ENCODE measurements at regions of chr17 and their contacts with region 1.

Region 1: GRCh38 chr17:67475236-67475937 is 98.3 kb downstream of the PITPNC1 start:
- DNase-seq: peak; percentile 95
- ATAC-seq: peak; percentile 75
- H3K4me3 ChIP-seq: no peak overlapping the region
- H3K27ac ChIP-seq: peak overlapping the region; percentile 76
- H3K4me1 ChIP-seq: peaks cover 19% of the 10 kb centered on the region
- H3K27me3 ChIP-seq: no peaks in the 10 kb centered on the region
- CTCF ChIP-seq: peak; percentile 99

Region 2: GRCh38 chr17:67390646-67391384 is 84.6 kb before region 1 on chr17:
- CTCF ChIA-PET with region 1: interaction called, 8 read pairs
- POLR2A ChIA-PET with region 1: interaction called, 5 read pairs
- intact Hi-C with region 1: loop called (anchors 1 kb)
- DNase-seq: peak; percentile 99
- ATAC-seq: peak; percentile 96
- H3K4me3 ChIP-seq: no peak overlapping the region
- H3K27ac ChIP-seq: peak overlapping the region; percentile 93
- H3K4me1 ChIP-seq: peaks cover 22% of the 10 kb centered on the region
- H3K27me3 ChIP-seq: no peaks in the 10 kb centered on the region
- CTCF ChIP-seq: peak; percentile 40

Region 3: DNA sequence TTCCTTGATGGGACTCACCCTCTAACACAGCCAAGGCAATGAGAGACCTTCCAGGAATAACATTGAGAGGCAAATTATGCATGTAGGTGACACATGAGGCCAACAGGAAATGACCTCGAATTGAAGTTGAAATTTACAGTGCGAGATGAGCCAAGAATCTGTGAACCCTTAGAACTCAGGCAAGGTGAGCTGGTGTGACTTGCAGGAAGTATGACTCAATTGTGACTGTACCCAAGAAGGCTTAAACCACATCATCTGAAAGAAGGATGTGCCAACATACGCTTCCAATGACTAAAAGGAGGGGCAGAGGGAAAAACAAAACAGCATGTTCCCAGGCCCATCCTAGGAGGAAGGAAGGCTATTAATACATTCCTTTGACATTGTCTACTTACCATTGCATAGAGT is 53.5 kb before region 1 on chr17:
- CTCF ChIA-PET with region 1: interaction called, 5 read pairs
- POLR2A ChIA-PET with region 1: no interaction called
- intact Hi-C with region 1: loop called (anchors 1 kb)
- DNase-seq: peak; percentile 100
- ATAC-seq: peak; percentile 97
- H3K4me3 ChIP-seq: no peak overlapping the region
- H3K27ac ChIP-seq: peak overlapping the region; percentile 96
- H3K4me1 ChIP-seq: peaks cover 29% of the 10 kb centered on the region
- H3K27me3 ChIP-seq: no peaks in the 10 kb centered on the region
- CTCF ChIP-seq: no peak

Region 4: GRCh38 chr17:67528751-67529436 is 53.5 kb after region 1 on chr17:
- CTCF ChIA-PET with region 1: no interaction called
- POLR2A ChIA-PET with region 1: no interaction called
- intact Hi-C with region 1: no loop called
- DNase-seq: peak; percentile 27
- ATAC-seq: peak; percentile 80
- H3K4me3 ChIP-seq: no peak overlapping the region
- H3K27ac ChIP-seq: no peak overlapping the region
- H3K4me1 ChIP-seq: no peaks in the 10 kb centered on the region
- H3K27me3 ChIP-seq: no peaks in the 10 kb centered on the region
- CTCF ChIP-seq: no peak

Region 5: DNA sequence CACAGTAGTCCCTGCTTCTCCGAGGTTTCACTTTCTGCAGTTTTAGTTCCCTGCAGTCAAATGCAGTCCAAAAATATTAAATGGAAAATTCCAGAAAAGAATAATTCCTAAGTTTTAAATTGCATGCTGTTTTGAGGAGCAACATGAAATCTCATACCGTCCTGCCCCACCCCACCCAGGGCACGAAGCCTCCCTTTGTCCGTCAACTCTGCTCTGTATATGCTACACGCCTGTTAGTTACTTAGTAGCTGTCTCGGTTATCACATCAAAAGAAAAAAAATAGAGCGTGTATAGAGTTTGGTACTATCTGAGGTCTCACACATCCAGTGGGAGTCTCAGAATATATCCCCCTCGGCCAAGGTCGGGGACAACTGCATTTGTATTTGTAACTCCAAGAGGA is 112.9 kb after region 1 on chr17:
- CTCF ChIA-PET with region 1: no interaction called
- POLR2A ChIA-PET with region 1: no interaction called
- intact Hi-C with region 1: no loop called
- DNase-seq: no peak
- ATAC-seq: no peak
- H3K4me3 ChIP-seq: no peak overlapping the region
- H3K27ac ChIP-seq: no peak overlapping the region
- H3K4me1 ChIP-seq: peaks cover 5% of the 10 kb centered on the region; the same call in 1 of the 2 replicates
- H3K27me3 ChIP-seq: no peaks in the 10 kb centered on the region
- CTCF ChIP-seq: no peak

Region 6: DNA sequence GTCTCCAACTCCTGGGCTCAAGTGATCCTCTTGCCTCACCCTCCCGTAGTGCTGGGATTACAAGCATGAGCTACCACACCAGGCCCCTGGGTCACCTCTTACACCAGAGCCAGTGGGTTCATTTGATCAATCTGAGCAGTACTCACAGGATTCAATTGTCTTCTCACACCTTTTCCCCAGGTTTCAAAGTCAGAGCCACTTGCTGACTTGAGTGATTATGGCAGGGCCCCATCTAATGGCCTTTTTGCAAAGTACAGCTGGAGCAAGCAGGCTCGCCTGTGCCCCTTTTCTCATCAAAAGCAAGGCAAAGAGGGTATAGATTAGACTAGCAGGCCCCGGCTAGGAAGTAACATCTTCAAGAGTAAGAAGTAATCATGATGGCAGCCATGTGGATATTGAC is 127.6 kb after region 1 on chr17:
- CTCF ChIA-PET with region 1: interaction called, 5 read pairs
- POLR2A ChIA-PET with region 1: no interaction called
- intact Hi-C with region 1: loop called (anchors 1 kb)
- DNase-seq: peak; percentile 75
- ATAC-seq: peak; percentile 91
- H3K4me3 ChIP-seq: no peak overlapping the region
- H3K27ac ChIP-seq: no peak overlapping the region
- H3K4me1 ChIP-seq: peaks cover 7% of the 10 kb centered on the region; the same call in 1 of the 2 replicates
- H3K27me3 ChIP-seq: no peaks in the 10 kb centered on the region
- CTCF ChIP-seq: peak; percentile 90

Region 7: GRCh38 chr17:67629971-67630320 is 154.6 kb after region 1 on chr17:
- CTCF ChIA-PET with region 1: no interaction called
- POLR2A ChIA-PET with region 1: no interaction called
- intact Hi-C with region 1: loop called (anchors 1 kb)
- DNase-seq: peak; percentile 80
- ATAC-seq: peak; percentile 87
- H3K4me3 ChIP-seq: no peak overlapping the region
- H3K27ac ChIP-seq: peak overlapping the region; percentile 3; the same call in 1 of the 2 replicates
- H3K4me1 ChIP-seq: no peaks in the 10 kb centered on the region
- H3K27me3 ChIP-seq: no peaks in the 10 kb centered on the region
- CTCF ChIP-seq: peak; percentile 82

Region 8: DNA sequence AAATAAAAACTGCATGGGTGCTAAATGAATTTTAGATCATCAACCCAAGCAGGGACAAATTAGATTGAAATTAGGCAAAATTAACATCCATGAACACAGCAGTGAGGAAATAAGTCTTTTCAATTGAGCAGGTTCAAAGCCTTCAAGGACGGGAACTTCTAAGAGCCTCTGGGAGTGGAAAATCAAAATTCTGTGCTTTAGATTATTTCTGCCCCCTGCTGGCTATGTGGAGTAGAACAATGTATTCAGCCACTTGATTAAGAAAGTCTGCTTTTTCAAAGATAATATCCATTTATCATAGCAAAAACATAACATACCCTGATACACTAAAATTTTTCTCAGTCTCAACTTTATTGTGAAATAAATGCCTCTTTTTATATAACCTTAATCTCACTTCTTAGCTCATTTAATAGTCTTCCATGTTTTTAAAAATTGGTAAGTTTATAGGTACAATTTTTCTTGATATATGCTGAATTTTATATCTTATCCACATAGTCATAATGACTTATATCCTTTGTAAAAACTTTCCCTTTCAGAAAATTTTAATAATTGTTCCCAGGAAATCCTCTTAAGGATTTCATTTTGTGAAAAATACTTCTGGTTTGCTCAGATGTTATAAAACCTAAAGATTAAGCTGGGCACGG is 214.3 kb after region 1 on chr17:
- CTCF ChIA-PET with region 1: no interaction called
- POLR2A ChIA-PET with region 1: no interaction called
- intact Hi-C with region 1: loop called (anchors 5 kb)
- DNase-seq: peak; percentile 86
- ATAC-seq: peak; percentile 58
- H3K4me3 ChIP-seq: no peak overlapping the region
- H3K27ac ChIP-seq: no peak overlapping the region
- H3K4me1 ChIP-seq: no peaks in the 10 kb centered on the region
- H3K27me3 ChIP-seq: no peaks in the 10 kb centered on the region
- CTCF ChIP-seq: peak; percentile 96

Measured in PC-3 (cell line).